Endothelial cell of umbilical vein (primary cell): ENCODE measurements at regions of chr2 and their contacts with region 1.

Region 1: GRCh38 chr2:200963124-200963917 is at the start of gene ORC2:
- DNase-seq: peak; percentile 95
- H3K4me3 ChIP-seq: peak within 1 kb of the TSS; percentile 30 to 79 (median 61)
- H3K27ac ChIP-seq: peak within 1 kb of the TSS; percentile 71
- H3K4me1 ChIP-seq: peaks cover 24% of the 10 kb centered on the region
- H3K27me3 ChIP-seq: no peaks in the 10 kb centered on the region
- CTCF ChIP-seq: peak; percentile 66 to 75
- POLR2A ChIP-seq: peak; percentile 69
- total RNA-seq, gene ORC2: 34.0 and 45.4 TPM in 2 replicates

Region 2: GRCh38 chr2:200975672-200976071 is 12.4 kb after region 1 on chr2:
- CTCF ChIA-PET with region 1: interaction called, 19 read pairs
- POLR2A ChIA-PET with region 1: interaction called, 3 read pairs
- dilution Hi-C with region 1: no loop called
- intact Hi-C with region 1: no loop called
- DNase-seq: peak; percentile 17
- H3K4me3 ChIP-seq: no peak overlapping the region
- H3K27ac ChIP-seq: no peak overlapping the region
- H3K4me1 ChIP-seq: no peaks in the 10 kb centered on the region
- H3K27me3 ChIP-seq: no peaks in the 10 kb centered on the region
- CTCF ChIP-seq: no peak
- POLR2A ChIP-seq: no peak

Region 3: GRCh38 chr2:201285499-201285898 is 322.2 kb after region 1 on chr2:
- CTCF ChIA-PET with region 1: no interaction called
- POLR2A ChIA-PET with region 1: no interaction called
- dilution Hi-C with region 1: no loop called
- intact Hi-C with region 1: no loop called
- DNase-seq: no peak
- H3K4me3 ChIP-seq: no peak overlapping the region
- H3K27ac ChIP-seq: no peak overlapping the region
- H3K4me1 ChIP-seq: no peaks in the 10 kb centered on the region
- H3K27me3 ChIP-seq: no peaks in the 10 kb centered on the region
- CTCF ChIP-seq: no peak
- POLR2A ChIP-seq: no peak

Region 4: DNA sequence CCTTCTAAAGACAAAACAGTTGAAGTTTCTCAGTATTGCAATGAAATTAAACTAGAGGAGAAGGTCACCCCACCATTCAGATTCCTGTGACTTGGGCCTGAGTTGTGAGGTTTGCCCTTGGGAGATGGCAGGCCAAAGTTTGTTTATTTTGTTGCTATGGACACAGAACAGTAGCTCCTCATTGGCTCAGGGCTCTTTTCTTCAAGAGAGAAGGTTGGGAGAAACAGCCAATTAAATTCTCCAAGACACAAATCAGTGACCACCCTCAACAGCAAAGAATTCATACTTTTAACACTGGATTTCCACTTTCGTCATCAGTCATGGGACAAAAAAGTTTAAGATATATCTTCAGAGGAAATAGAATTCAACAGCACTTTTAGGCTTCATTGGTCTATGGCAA is 393.9 kb after region 1 on chr2 and contains the start of gene FLACC1:
- CTCF ChIA-PET with region 1: no interaction called
- POLR2A ChIA-PET with region 1: no interaction called
- dilution Hi-C with region 1: no loop called
- intact Hi-C with region 1: no loop called
- DNase-seq: peak; percentile 24
- H3K4me3 ChIP-seq: no peak within 1 kb of the TSS
- H3K27ac ChIP-seq: no peak within 1 kb of the TSS
- H3K4me1 ChIP-seq: no peaks in the 10 kb centered on the region
- H3K27me3 ChIP-seq: no peaks in the 10 kb centered on the region
- CTCF ChIP-seq: no peak
- POLR2A ChIP-seq: no peak
- total RNA-seq, gene FLACC1: 1.4 TPM in 2 replicates